Activated CD4-positive, alpha-beta memory T cell treated with anti-CD3 and anti-CD28 coated beads for 36 hours (primary cell): ENCODE measurements at regions of chr16 and their contacts with region 1.

Region 1: DNA sequence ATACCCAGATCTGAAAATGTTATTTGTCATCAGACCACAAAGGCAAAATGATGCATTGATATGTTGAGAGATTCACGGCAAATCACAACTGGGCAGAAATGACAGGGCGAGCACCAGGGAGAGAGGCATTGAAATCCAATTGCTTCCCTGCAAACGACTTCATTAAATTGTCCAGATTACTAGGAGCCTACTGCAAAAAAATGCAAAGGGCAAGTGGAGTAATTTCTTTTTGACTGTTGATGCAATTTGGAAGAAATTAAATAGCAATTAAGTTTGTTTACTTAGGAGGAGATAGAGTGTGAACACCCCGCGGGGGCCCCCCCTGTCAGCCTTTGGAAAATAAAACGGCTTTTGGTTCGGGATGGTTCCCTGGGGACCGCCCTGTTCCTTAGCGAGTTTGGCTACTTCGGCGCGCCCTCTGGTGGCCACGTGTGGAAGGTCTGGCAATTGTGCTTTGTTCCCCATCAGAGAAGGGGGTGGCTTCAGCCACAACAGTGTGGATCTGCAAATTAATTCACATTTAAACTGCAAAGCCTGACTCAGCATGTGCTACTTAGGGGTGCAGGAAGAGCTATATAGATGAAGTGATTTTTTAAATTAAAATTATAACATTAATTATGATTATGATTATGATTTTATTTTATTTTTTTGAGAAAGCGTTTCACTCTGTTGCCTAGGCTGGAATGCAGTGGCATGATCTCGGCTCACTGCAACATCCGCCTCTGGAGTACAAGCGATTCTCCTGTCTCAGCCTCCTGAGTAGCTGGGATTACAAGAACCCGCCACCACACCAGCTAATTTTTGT is 14.5 kb upstream of the TMC7 start:
- DNase-seq: peak; percentile 86
- H3K4me3 Mint-ChIP-seq: peak overlapping the region; percentile 20
- H3K27ac Mint-ChIP-seq: no peak overlapping the region
- H3K4me1 Mint-ChIP-seq: peaks cover 6% of the 10 kb centered on the region
- H3K27me3 Mint-ChIP-seq: no peaks in the 10 kb centered on the region

Region 2: GRCh38 chr16:18932243-18932981 is 36.8 kb before region 1 on chr16:
- CTCF ChIA-PET with region 1: no interaction called
- POLR2A ChIA-PET with region 1: no interaction called
- intact Hi-C with region 1: loop called (anchors 5 kb)
- DNase-seq: no peak
- H3K4me3 Mint-ChIP-seq: no peak overlapping the region
- H3K27ac Mint-ChIP-seq: no peak overlapping the region
- H3K4me1 Mint-ChIP-seq: peaks cover 2% of the 10 kb centered on the region
- H3K27me3 Mint-ChIP-seq: no peaks in the 10 kb centered on the region

Region 3: GRCh38 chr16:18950469-18951185 is 18.6 kb before region 1 on chr16:
- CTCF ChIA-PET with region 1: interaction called, 5 read pairs
- POLR2A ChIA-PET with region 1: no interaction called
- intact Hi-C with region 1: loop called (anchors 2 kb)
- DNase-seq: no peak
- H3K4me3 Mint-ChIP-seq: no peak overlapping the region
- H3K27ac Mint-ChIP-seq: no peak overlapping the region
- H3K4me1 Mint-ChIP-seq: peaks cover 19% of the 10 kb centered on the region
- H3K27me3 Mint-ChIP-seq: no peaks in the 10 kb centered on the region

Region 4: GRCh38 chr16:19029980-19030379 is 60.7 kb after region 1 on chr16:
- CTCF ChIA-PET with region 1: no interaction called
- POLR2A ChIA-PET with region 1: no interaction called
- intact Hi-C with region 1: no loop called
- DNase-seq: no peak
- H3K4me3 Mint-ChIP-seq: no peak overlapping the region
- H3K27ac Mint-ChIP-seq: no peak overlapping the region
- H3K4me1 Mint-ChIP-seq: no peaks in the 10 kb centered on the region
- H3K27me3 Mint-ChIP-seq: no peaks in the 10 kb centered on the region

Region 5: GRCh38 chr16:19153876-19154275 is 184.6 kb after region 1 on chr16:
- CTCF ChIA-PET with region 1: no interaction called
- POLR2A ChIA-PET with region 1: no interaction called
- intact Hi-C with region 1: no loop called
- DNase-seq: no peak
- H3K4me3 Mint-ChIP-seq: no peak overlapping the region
- H3K27ac Mint-ChIP-seq: no peak overlapping the region
- H3K4me1 Mint-ChIP-seq: no peaks in the 10 kb centered on the region
- H3K27me3 Mint-ChIP-seq: peaks cover 8% of the 10 kb centered on the region